OCI-LY7 (cell line): ENCODE measurements at regions of chr2 and their contacts with region 1.

Region 1: GRCh38 chr2:224764565-224765236 is 48.5 kb upstream of the CCDC195 start:
- DNase-seq: peak; percentile 56
- H3K4me3 ChIP-seq: peak overlapping the region; percentile 23
- H3K27ac ChIP-seq: peak overlapping the region; percentile 68
- H3K4me1 ChIP-seq: peaks cover 32% of the 10 kb centered on the region
- CTCF ChIP-seq: no peak

Region 2: GRCh38 chr2:224749136-224749535 is 15.6 kb before region 1 on chr2:
- CTCF ChIA-PET with region 1: no interaction called
- POLR2A ChIA-PET with region 1: interaction called, 14 read pairs
- intact Hi-C with region 1: no loop called
- DNase-seq: no peak
- H3K4me3 ChIP-seq: no peak overlapping the region
- H3K27ac ChIP-seq: no peak overlapping the region
- H3K4me1 ChIP-seq: peaks cover 60% of the 10 kb centered on the region
- CTCF ChIP-seq: peak; percentile 56